Right cardiac atrium (tissue), 5 donors: ENCODE measurements at regions of chr3 and their contacts with region 1.

Region 1: GRCh38 chr3:49570028-49570654 is 15.9 kb downstream of the BSN start:
- DNase-seq: no peak
- ATAC-seq: no peak
- H3K4me3 ChIP-seq: no peak overlapping the region
- H3K27ac ChIP-seq: no peak overlapping the region
- H3K4me1 ChIP-seq: no peaks in the 10 kb centered on the region
- H3K27me3 ChIP-seq: no peaks in the 10 kb centered on the region

Region 2: GRCh38 chr3:49638445-49638844 is 68.3 kb after region 1 on chr3:
- intact Hi-C with region 1: loop called in 1 of 4 experiments (anchors 10 kb)
- DNase-seq: no peak
- ATAC-seq: peak; percentile 34 to 74
- H3K4me3 ChIP-seq: no peak overlapping the region
- H3K27ac ChIP-seq: no peak overlapping the region
- H3K4me1 ChIP-seq: no peaks in the 10 kb centered on the region
- H3K27me3 ChIP-seq: no peaks in the 10 kb centered on the region